AG04449 (cell line): ENCODE measurements at regions of chr5 and their contacts with region 1.

Region 1: DNA sequence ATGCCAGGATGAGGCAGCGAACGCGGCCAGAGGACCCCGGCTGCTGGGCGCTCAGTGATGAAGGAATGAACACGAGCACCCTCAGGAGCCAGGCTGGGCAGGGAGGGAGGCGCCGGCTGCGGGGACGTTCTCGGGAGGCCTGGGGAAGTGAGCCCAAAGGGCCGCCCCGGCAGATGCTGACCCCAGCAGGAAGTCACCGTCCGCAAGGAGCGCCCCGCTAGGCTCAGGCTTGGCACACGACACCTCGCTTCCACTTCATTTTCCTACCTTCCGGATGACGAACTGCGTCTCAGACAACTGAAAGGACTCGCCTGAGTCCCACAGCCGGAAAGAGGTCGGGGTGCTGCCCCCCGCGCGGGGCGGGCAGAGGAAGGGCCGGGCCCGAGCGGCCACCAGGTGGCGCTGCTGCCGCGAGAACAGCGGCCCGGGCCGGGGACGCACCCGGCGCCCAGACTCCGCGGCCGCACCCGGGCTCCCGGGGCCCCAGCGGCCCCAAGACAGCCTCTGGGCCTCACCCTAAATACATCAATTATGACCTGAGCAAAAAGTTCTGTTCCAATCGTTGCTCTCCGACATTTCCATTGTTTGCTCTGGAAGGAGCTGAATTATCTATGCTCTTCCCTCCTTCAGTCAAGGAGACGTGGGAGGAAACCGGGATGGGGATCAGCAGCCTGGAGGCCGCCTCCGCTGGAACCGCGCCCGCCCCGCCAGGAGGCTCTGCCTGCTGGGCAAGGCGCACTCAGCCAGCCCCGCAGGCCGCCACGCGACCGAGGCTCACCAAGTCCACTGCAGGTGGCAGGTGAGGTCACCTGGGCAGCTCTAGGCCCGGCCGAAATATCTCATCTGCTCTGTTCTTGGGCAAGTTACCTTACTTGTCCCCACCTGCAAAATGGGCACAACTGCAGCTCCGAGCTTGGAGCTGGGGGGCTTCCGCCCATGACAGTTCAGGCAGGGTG is 107.0 kb downstream of the ZNF354C start:
- DNase-seq: no peak
- H3K4me3 ChIP-seq: peak overlapping the region; percentile 43
- CTCF ChIP-seq: peak; percentile 81

Region 2: DNA sequence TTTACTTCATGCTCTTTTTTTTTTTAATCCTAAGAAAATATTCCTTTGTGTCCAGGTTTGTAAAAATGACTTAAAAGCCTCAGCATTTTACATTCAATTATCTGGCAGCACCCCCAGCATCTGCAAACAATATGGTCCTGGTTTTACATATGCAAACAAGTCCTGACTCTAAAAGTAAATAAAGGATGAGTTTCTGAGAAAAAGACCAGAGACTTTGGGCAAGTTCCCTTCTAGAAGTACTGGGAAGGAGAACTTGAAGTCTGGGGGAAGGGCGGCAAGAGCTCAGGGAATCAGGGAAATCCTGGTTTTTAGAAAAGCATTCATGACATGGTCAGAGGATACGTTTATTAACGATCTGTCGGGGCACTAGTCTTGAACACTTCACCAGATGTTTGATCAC is 602.8 kb before region 1 on chr5:
- CTCF ChIA-PET with region 1: no interaction called
- POLR2A ChIA-PET with region 1: no interaction called
- DNase-seq: no peak
- H3K4me3 ChIP-seq: no peak overlapping the region
- CTCF ChIP-seq: no peak

Region 3: DNA sequence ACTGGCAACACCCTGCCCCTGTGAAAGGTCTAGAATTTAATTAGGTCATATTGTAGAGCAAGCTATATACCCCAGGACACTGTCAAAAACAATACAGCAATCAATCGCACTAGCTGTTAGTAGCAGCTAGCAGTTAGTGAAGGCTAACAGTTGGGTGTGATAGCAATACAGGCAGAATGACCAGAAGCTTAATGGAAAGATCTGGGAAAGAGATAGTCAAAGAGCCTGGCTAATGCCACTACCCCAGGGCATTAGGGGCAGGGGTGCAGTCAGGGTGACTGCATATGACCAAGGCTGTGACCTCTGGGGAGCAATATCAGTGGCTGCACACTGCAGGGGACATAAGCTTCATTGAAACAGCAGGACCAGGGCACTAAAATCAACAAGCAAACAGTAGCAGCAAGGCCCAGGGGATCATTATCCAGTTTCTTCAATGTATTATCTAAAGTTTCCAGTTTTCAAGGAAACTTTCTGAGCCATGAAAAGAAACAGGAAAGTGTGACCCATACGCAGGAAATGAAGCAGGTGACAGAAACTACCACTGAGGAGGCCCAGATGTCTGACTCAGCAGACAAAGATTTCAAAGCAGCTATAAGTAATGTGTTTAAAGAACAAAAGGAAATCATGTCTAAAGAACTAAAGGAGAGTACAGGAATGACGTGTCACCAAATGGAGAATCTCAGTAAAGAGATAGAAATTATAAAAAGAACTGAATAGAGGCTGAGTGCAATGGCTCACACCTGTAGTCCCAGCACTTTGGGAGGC is 24.5 kb before region 1 on chr5:
- CTCF ChIA-PET with region 1: interaction called, 23 read pairs
- POLR2A ChIA-PET with region 1: no interaction called
- DNase-seq: peak; percentile 40
- H3K4me3 ChIP-seq: no peak overlapping the region
- CTCF ChIP-seq: no peak

Region 4: GRCh38 chr5:179181988-179182387 is 14.8 kb after region 1 on chr5:
- CTCF ChIA-PET with region 1: interaction called, 21 read pairs
- POLR2A ChIA-PET with region 1: no interaction called
- DNase-seq: no peak
- H3K4me3 ChIP-seq: no peak overlapping the region
- CTCF ChIP-seq: no peak

Region 5: DNA sequence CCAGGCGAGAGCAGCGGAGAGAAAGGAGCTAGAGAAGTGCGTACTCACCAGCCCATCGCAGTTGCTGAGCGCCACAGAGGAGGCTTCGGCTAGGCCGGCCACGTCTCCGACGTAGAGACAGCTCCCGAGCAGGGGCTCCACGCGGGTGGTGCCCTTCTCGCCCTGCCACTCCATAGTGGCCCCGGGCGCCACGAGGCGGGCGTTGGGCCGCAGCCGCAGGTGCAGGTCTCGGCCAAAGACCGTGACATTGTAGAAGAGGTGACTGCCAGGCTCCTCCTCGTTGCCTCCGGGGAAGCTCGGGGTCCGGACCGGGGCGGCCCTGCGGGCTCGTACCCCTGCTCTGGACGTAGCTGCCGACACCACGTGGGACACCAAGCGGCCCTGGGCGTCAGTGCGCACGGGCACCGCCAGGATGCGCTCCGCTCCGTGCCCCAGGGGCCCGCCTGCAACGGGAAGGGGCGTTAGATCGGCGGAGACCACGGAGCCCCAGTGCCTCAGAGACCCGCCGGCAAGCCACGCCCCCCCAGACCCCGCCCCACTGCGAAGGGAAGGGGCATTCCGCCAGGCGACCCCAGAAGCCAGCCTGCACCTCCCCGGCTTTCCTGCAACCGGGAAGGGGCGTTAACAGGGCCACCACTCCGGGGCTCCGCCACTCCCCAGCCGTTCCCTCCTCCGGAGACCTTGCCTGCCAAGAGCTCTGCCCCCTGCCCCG is 176.7 kb after region 1 on chr5:
- CTCF ChIA-PET with region 1: interaction called, 48 read pairs
- POLR2A ChIA-PET with region 1: no interaction called
- DNase-seq: no peak
- H3K4me3 ChIP-seq: peak overlapping the region; percentile 78
- CTCF ChIP-seq: peak; percentile 84

Region 6: GRCh38 chr5:179404321-179405053 is 237.3 kb after region 1 on chr5:
- CTCF ChIA-PET with region 1: interaction called, 88 read pairs
- POLR2A ChIA-PET with region 1: no interaction called
- DNase-seq: no peak
- H3K4me3 ChIP-seq: no peak overlapping the region
- CTCF ChIP-seq: peak; percentile 65

Region 7: GRCh38 chr5:179495906-179496455 is 328.8 kb after region 1 on chr5:
- CTCF ChIA-PET with region 1: interaction called, 140 read pairs
- POLR2A ChIA-PET with region 1: no interaction called
- DNase-seq: no peak
- H3K4me3 ChIP-seq: no peak overlapping the region
- CTCF ChIP-seq: no peak